OCI-LY7 (cell line): ENCODE measurements at regions of chr6 and their contacts with region 1.

Region 1: GRCh38 chr6:72084992-72085569 is 198.7 kb downstream of the RIMS1 start:
- DNase-seq: peak; percentile 37
- H3K4me3 ChIP-seq: no peak overlapping the region
- H3K27ac ChIP-seq: no peak overlapping the region
- H3K4me1 ChIP-seq: no peaks in the 10 kb centered on the region
- CTCF ChIP-seq: peak; percentile 90

Region 2: DNA sequence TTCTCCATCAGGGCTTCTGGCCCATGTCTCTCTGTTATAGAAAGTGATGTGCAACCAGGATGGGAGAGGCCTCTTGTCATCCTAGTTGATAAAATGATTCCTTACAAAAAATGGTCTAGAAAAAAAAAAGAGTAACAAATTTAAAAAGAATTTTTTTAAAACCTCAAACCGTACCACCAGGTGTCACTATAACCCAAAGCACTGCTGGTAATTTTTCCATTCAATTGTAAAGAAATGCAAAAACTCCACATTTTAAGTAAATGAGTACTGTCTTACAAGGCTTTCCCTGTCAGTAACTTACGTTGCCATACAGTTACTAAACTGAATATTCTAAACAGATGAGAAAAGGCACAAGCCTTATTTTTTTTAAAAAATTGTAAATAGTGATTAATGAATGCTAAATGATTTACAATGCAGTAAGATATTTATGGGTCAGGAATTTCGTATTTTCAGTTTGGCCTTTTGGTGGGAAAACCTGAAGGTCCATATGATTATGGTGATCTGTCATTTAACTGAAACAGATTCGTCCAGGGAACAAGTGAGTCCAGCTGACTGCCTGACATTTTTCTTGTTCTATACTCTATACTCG is 701.1 kb before region 1 on chr6:
- CTCF ChIA-PET with region 1: no interaction called
- POLR2A ChIA-PET with region 1: no interaction called
- intact Hi-C with region 1: loop called (anchors 5 kb)
- DNase-seq: peak; percentile 60
- H3K4me3 ChIP-seq: no peak overlapping the region
- H3K27ac ChIP-seq: no peak overlapping the region
- H3K4me1 ChIP-seq: no peaks in the 10 kb centered on the region
- CTCF ChIP-seq: peak; percentile 93

Region 3: DNA sequence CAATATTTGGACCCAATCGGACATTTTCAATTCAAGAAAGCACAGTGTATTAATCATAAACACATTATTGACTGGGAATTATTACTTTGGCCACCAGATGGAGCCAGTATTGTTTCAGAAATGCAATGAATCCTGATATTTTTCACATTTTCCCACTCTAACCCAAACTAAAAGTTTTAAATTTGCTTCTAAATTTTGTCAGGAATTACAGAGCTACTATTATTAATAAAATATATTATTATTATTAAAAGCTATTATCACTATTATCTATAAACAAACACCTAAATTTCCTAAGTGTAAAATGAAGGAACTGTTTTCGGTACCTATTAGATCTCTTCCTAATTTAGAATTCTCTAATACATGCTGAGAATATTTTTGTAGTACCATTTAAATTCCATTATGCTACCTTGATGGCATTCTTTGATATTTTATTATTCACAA is 551.1 kb before region 1 on chr6:
- CTCF ChIA-PET with region 1: no interaction called
- POLR2A ChIA-PET with region 1: no interaction called
- intact Hi-C with region 1: loop called (anchors 2 kb)
- DNase-seq: peak; percentile 27
- H3K4me3 ChIP-seq: no peak overlapping the region
- H3K27ac ChIP-seq: no peak overlapping the region
- H3K4me1 ChIP-seq: no peaks in the 10 kb centered on the region
- CTCF ChIP-seq: peak; percentile 89

Region 4: DNA sequence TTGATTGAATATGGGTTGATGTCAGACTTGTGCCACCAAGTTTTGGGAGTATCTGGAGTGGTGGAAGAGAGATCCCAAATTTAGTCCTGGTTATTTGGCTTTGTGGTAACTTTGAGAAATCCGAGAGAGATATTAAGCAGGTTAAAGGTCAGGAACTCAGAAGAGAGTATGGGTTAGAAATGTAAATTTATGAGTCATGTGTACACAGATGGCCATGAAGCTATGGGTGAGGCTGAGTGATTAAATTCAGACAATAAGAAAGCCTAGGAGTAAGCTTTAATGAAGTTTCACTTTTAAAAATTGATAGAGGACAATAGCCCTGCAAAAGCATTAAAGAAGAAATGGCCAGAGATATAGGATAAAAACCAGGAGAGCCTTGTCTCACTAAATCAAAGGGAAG is 184.4 kb before region 1 on chr6:
- CTCF ChIA-PET with region 1: no interaction called
- POLR2A ChIA-PET with region 1: no interaction called
- intact Hi-C with region 1: no loop called
- DNase-seq: no peak
- H3K4me3 ChIP-seq: no peak overlapping the region
- H3K27ac ChIP-seq: no peak overlapping the region
- H3K4me1 ChIP-seq: no peaks in the 10 kb centered on the region
- CTCF ChIP-seq: no peak